ENCODE measurements at regions of chrX and their contacts with region 1.

Region 1: DNA sequence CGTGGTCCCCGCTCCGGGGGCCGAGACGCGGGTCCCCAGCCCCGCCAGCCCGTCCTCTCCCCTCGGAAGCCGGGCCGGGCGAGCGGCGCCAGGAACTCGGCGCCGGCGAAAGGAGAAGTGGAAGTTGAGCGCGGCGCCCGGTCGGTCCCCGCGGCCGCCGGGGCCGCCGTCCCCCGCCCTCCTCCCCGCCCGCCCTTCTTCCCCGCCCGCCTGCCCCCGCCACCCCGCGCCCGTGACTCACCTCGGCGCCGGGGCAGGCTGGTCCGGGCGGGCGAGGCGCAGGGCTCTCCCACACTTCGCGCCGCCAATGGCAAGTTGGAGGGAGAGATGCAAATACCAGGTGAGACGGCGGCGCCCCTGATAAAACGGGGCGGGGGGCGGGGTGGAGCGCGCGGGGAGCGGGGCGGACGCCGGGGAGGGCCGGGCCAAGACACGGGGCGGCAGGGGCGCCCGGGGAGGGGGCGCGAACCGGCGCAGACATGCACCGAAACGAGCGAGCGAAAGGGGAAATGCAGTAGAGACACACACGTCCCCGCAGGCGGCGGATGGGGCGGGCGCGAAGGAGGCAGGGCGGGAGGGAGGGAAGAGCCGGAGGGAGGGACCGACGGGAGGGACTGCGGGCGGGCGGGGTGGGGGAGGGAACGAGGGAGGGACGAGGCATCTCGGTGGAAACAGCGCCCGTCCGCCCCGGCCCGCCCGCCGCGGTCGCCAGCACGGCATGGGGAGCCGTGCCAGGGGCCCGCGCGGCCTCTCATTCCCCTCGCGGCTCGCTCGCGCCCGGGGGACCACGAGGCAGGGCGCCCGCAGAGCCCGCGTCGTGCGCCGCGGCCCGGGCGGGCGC is at the start of gene ELF4:
- DNase-seq: peak; percentile 57
- ATAC-seq: peak; percentile 69
- H3K4me3 Mint-ChIP-seq: peak within 1 kb of the TSS; percentile 89
- H3K27ac Mint-ChIP-seq: peak within 1 kb of the TSS; percentile 85
- H3K4me1 Mint-ChIP-seq: peaks cover 43% of the 10 kb centered on the region
- H3K27me3 Mint-ChIP-seq: no peaks in the 10 kb centered on the region
- total RNA-seq, gene ELF4: 38.2 to 39.0 TPM

Region 2: DNA sequence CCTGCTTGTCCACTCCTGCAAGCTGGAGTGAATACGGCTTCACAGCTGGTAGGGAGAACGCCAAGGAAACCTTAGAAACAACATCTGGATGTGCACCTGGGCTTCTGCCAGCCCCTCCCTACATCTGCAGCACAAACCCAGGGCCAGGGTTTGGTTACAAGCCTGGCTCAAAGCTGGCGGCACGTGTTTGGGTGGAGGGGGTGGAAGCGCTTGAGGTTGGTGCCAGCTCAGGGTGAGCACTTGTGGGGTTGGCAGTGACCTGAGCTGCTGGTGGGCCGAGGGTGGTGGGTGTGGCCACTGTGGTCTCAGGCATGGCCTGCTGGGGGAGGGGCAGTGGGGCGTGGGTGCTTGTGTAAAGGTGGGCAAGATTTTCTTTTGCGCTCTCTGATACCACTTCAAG is 15.9 kb before region 1 on chrX:
- CTCF ChIA-PET with region 1: interaction called, 11 read pairs
- POLR2A ChIA-PET with region 1: interaction called, 3 read pairs
- DNase-seq: no peak
- ATAC-seq: no peak
- H3K4me3 Mint-ChIP-seq: no peak overlapping the region
- H3K27ac Mint-ChIP-seq: no peak overlapping the region
- H3K4me1 Mint-ChIP-seq: peaks cover 67% of the 10 kb centered on the region
- H3K27me3 Mint-ChIP-seq: no peaks in the 10 kb centered on the region

Measured in activated CD8-positive, alpha-beta T cell treated with anti-CD3 and anti-CD28 coated beads, Interleukin-2, amount 10 ng/mL, durations not matched to agents 7 days and 5 days (primary cell).